BJ (cell line): ENCODE measurements at regions of chr5 and their contacts with region 1.

Region 1: DNA sequence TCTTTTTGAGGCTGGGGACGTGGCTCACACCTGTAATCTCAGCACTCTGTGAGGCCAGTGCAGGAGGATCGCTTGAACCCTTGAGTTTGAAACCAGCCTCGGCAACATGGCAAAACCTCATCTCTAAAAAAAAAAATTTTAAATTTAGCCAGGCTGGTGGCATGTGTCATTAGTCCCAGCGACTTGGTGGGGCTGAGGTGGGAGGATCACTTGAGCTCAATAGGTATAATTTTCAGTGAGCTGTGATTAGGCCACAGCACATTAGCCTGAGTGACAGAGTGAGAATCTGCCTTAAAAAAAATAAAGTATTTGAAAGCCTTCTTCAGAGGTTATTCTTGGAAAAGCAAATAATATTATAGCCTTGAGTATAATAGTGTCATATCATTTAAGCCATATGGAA is 41.8 kb downstream of the NSD1 start:
- DNase-seq: no peak
- H3K4me3 ChIP-seq: no peak overlapping the region
- H3K27me3 ChIP-seq: no peaks in the 10 kb centered on the region
- CTCF ChIP-seq: no peak

Region 2: DNA sequence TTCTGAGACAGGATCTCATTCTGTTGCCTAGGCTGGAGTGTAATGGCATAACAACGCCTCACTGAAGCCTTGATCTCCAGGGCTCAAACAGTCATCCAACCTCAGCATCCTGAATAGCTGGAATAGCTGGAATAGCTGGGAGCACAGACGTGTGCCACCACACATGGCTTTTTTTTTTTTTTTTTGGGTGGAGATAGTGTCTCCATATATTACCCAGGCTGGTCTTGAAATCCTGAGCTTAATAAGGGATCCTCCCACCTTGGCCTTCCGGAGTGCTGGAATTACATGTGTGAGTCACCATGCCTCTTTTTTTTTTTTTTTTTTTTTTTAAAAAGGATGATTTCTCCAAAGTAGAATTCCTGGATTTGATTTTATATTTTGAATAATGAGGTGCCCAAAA is 18.9 kb after region 1 on chr5:
- CTCF ChIA-PET with region 1: no interaction called
- POLR2A ChIA-PET with region 1: interaction called, 14 read pairs
- DNase-seq: peak; percentile 96
- H3K4me3 ChIP-seq: no peak overlapping the region
- H3K27me3 ChIP-seq: no peaks in the 10 kb centered on the region
- CTCF ChIP-seq: no peak

Region 3: GRCh38 chr5:177336112-177336511 is 160.8 kb after region 1 on chr5:
- CTCF ChIA-PET with region 1: no interaction called
- POLR2A ChIA-PET with region 1: no interaction called
- DNase-seq: no peak
- H3K4me3 ChIP-seq: no peak overlapping the region
- H3K27me3 ChIP-seq: no peaks in the 10 kb centered on the region
- CTCF ChIP-seq: peak; percentile 39